AG04449 (cell line): ENCODE measurements at regions of chr10 and their contacts with region 1.

Region 1: GRCh38 chr10:124388823-124389612 is 29.7 kb downstream of the OAT start:
- DNase-seq: no peak
- H3K4me3 ChIP-seq: peak overlapping the region; percentile 50
- CTCF ChIP-seq: peak; percentile 97

Region 2: GRCh38 chr10:123974406-123974805 is 414.6 kb before region 1 on chr10:
- CTCF ChIA-PET with region 1: interaction called, 10 read pairs
- POLR2A ChIA-PET with region 1: no interaction called
- DNase-seq: no peak
- H3K4me3 ChIP-seq: no peak overlapping the region
- CTCF ChIP-seq: no peak

Region 3: GRCh38 chr10:124000792-124001201 is 388.2 kb before region 1 on chr10:
- CTCF ChIA-PET with region 1: interaction called, 573 read pairs
- POLR2A ChIA-PET with region 1: interaction called, 7 read pairs
- DNase-seq: no peak
- H3K4me3 ChIP-seq: no peak overlapping the region
- CTCF ChIP-seq: no peak

Region 4: DNA sequence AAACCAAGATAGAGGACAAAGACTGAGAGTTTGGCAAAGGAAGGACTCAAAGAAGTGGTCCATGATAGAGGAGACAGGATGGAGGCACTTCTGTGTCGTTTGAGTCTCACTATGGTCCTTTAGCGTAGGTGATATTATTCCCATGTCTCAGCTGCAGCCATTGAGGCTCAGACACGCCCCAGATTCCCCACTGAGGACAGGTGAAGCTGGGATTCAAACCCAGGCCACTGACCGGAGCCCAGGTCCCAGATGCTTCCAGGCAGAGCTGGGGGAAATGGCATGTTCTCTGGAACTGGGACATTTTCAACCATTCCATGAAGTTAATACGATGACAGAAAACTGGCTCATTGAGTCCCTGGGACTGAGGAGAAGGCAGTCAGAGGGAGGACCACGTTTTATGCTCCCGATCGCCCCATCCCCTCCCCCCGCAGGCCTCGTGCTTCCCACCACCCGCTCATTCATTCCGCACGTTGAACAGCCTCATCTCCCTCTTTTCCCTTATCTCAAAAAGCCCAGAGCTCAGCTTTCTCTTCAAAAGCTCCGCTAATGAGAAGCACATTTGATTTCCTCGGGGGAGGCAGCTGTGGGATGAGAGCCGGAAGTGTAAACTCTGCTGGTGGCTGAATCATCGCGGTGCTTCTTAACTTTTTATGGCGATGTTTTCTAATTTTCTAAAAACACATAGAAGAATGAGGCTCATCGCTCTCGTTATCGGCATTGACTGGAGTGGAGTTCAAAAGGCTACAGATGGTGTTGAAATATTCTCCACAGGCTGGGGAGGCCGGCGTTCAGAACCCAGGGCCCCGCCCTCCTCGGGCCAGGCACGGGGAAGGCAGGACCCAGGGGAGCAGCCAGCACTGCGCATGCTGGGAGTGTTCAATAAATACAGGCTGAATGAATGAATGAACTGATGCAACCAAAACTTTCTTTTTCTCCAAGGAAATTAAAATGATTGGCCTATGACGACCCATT is 34.3 kb before region 1 on chr10:
- CTCF ChIA-PET with region 1: interaction called, 16 read pairs
- POLR2A ChIA-PET with region 1: no interaction called
- DNase-seq: no peak
- H3K4me3 ChIP-seq: peak overlapping the region; percentile 49
- CTCF ChIP-seq: no peak

Region 5: DNA sequence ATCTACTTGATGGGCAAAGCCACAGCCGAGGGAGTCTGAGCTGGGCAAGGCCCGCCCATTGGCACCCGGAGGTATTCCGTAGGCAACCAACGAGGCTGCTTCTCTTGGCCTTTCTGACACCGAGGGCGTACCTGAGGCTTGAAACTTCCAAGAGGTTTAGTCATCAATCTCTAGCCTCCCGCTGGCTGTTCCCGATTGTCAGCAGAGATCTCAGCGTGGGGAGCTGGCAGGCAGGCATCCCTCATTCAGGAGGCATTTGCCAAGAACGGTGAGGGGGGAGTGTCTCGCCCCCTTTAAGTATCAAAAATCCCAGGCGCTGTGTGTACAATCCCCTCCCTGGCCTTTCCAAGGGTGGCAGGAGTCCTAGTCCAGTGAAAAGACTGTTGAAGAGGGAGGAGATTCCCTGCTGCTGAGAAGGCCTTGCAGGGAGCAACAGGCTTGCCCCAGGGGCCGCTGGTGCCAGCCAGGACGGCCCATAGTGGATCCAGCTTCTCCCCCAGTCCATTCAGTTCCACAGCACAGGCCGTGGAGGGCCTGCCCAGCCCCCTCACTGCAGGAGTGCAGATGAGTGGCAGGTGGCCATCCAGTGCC is 10.0 kb before region 1 on chr10:
- CTCF ChIA-PET with region 1: interaction called, 31 read pairs
- POLR2A ChIA-PET with region 1: no interaction called
- DNase-seq: no peak
- H3K4me3 ChIP-seq: no peak overlapping the region
- CTCF ChIP-seq: no peak

Region 6: DNA sequence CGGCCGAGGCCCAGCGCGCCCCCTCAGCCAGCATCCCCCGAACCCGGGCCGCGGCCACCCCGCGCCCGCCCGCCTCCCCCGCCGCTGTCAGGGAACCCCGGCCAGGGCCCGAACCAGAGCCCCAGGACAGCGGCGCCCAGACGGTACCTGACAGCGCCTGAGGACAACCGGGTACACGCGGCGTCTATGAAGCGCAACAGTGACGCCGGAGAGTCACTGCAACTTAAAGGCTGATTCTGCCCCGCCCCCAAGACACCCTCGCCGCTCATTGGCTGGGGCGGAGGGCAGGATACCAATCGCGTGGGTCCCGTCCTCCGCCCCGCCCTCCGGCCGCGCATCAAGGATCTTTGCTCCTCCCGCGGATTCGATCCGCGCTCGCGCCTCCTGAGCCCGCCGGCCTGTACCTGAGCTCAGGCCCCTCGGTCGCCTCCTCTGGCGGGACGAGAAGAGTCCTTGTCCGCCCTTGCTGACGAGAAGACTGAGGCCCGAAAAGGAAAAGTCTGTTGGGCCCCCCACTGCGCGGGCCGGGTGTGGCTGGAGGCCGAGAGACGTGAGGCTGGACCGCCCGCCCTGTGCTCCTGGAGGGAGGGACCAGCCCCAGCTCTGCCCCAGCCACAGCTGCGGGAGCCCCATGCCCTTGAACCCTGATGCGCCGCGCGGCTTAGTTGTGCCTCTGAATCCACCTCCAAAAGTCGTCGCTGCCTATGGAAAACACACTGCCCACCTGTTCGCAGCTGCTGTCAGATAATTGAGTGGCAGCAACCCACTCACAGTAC is 29.9 kb after region 1 on chr10 and contains the start of gene OAT:
- CTCF ChIA-PET with region 1: interaction called, 37 read pairs
- POLR2A ChIA-PET with region 1: interaction called, 3 read pairs
- DNase-seq: peak; percentile 65
- H3K4me3 ChIP-seq: peak within 1 kb of the TSS; percentile 76
- CTCF ChIP-seq: peak; percentile 40

Region 7: GRCh38 chr10:124530215-124530665 is 141.2 kb after region 1 on chr10:
- CTCF ChIA-PET with region 1: no interaction called
- POLR2A ChIA-PET with region 1: no interaction called
- DNase-seq: peak; percentile 17
- H3K4me3 ChIP-seq: no peak overlapping the region
- CTCF ChIP-seq: peak; percentile 98